CD8-positive, alpha-beta memory T cell (primary cell): ENCODE measurements at regions of chr2 and their contacts with region 1.

Region 1: GRCh38 chr2:96174251-96175144 is 29.3 kb upstream of the DUSP2 start:
- DNase-seq: peak; percentile 73 to 88 (median 75)
- H3K4me3 ChIP-seq: no peak overlapping the region
- H3K4me3 Mint-ChIP-seq: peak overlapping the region in 1 of 7 donors; percentile 22
- H3K27ac ChIP-seq: no peak overlapping the region
- H3K27ac Mint-ChIP-seq: peak overlapping the region in 7 of 8 donors; percentile 0 to 96 (median 83)
- H3K4me1 ChIP-seq: peaks cover 7% of the 10 kb centered on the region
- H3K4me1 Mint-ChIP-seq: peaks cover 6 to 14% (median 7%) of the 10 kb centered on the region in 3 donors
- H3K27me3 ChIP-seq: no peaks in the 10 kb centered on the region
- H3K27me3 Mint-ChIP-seq: peaks cover 0 to 1% of the 10 kb centered on the region in 2 donors

Region 2: GRCh38 chr2:96024336-96025193 is 149.9 kb before region 1 on chr2:
- CTCF ChIA-PET with region 1: interaction called, 19 read pairs
- POLR2A ChIA-PET with region 1: no interaction called
- DNase-seq: no peak
- H3K4me3 ChIP-seq: no peak overlapping the region
- H3K4me3 Mint-ChIP-seq: no peak overlapping the region
- H3K27ac ChIP-seq: no peak overlapping the region
- H3K27ac Mint-ChIP-seq: no peak overlapping the region
- H3K4me1 ChIP-seq: no peaks in the 10 kb centered on the region
- H3K4me1 Mint-ChIP-seq: peaks cover 2 to 3% (median 3%) of the 10 kb centered on the region in 3 donors
- H3K27me3 ChIP-seq: no peaks in the 10 kb centered on the region
- H3K27me3 Mint-ChIP-seq: no peaks in the 10 kb centered on the region

Region 3: GRCh38 chr2:96116879-96117697 is 57.4 kb before region 1 on chr2:
- CTCF ChIA-PET with region 1: interaction called, 29 read pairs
- POLR2A ChIA-PET with region 1: interaction called, 3 read pairs
- DNase-seq: peak; percentile 48 to 72 (median 63)
- H3K4me3 ChIP-seq: peak overlapping the region; percentile 29
- H3K4me3 Mint-ChIP-seq: peak overlapping the region; percentile 47 to 87 (median 75)
- H3K27ac ChIP-seq: no peak overlapping the region
- H3K27ac Mint-ChIP-seq: peak overlapping the region in 4 of 8 donors; percentile 27 to 47 (median 30)
- H3K4me1 ChIP-seq: peaks cover 7% of the 10 kb centered on the region
- H3K4me1 Mint-ChIP-seq: peaks cover 9 to 35% (median 11%) of the 10 kb centered on the region in 3 donors
- H3K27me3 ChIP-seq: no peaks in the 10 kb centered on the region
- H3K27me3 Mint-ChIP-seq: peaks cover 19% of the 10 kb centered on the region in 2 donors

Region 4: DNA sequence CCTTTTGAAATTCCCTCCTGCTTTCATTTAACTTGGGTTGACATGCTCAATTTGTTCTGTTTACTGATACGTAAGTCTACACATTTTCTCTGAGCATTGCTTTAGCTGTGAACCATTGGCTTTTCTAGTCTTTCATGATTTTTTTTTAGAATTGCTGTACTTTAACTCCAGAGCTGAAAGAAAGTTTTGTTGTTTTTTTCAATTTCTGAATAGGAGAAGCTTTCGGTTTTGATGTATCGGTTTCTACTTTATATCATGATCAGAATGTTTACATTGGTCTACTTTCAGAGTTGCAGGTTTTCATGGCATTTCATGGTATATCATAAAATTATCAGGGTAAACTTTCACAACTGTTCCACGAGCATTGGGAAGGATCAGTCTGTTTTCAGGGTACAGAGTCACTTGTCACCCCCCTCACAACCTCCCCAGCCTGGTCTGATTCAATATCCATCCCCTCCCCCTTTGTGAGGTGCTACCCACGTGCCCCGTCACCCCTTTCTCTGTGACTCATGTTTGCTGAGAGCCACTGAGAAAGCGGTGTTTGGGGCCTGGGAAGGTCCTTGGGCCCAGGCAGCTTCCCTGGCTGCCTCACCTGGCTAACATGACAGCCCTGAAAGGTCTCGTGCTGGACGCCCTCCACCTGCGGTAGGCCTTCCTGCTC is 43.2 kb before region 1 on chr2:
- CTCF ChIA-PET with region 1: interaction called, 385 read pairs
- POLR2A ChIA-PET with region 1: interaction called, 37 read pairs
- DNase-seq: peak in 2 of 5 donors; percentile 40 to 66
- H3K4me3 ChIP-seq: no peak overlapping the region
- H3K4me3 Mint-ChIP-seq: peak overlapping the region in 4 of 7 donors; percentile 6 to 64 (median 43)
- H3K27ac ChIP-seq: no peak overlapping the region
- H3K27ac Mint-ChIP-seq: peak overlapping the region; percentile 62 to 93 (median 76)
- H3K4me1 ChIP-seq: no peaks in the 10 kb centered on the region
- H3K4me1 Mint-ChIP-seq: peaks cover 16 to 52% (median 22%) of the 10 kb centered on the region in 3 donors
- H3K27me3 ChIP-seq: no peaks in the 10 kb centered on the region
- H3K27me3 Mint-ChIP-seq: peaks cover 0 to 3% of the 10 kb centered on the region in 2 donors

Region 5: GRCh38 chr2:96138179-96139145 is 36.0 kb before region 1 on chr2 and contains the start of gene ASTL:
- CTCF ChIA-PET with region 1: interaction called, 385 read pairs
- POLR2A ChIA-PET with region 1: interaction called, 37 read pairs
- DNase-seq: peak; percentile 46 to 77 (median 67)
- H3K4me3 ChIP-seq: no peak within 1 kb of the TSS
- H3K4me3 Mint-ChIP-seq: peak within 1 kb of the TSS in 4 of 7 donors; percentile 17 to 61 (median 38)
- H3K27ac ChIP-seq: no peak within 1 kb of the TSS
- H3K27ac Mint-ChIP-seq: peak within 1 kb of the TSS; percentile 23 to 100 (median 88)
- H3K4me1 ChIP-seq: peaks cover 32% of the 10 kb centered on the region
- H3K4me1 Mint-ChIP-seq: peaks cover 30 to 68% (median 41%) of the 10 kb centered on the region in 3 donors
- H3K27me3 ChIP-seq: no peaks in the 10 kb centered on the region
- H3K27me3 Mint-ChIP-seq: peaks cover 0 to 3% of the 10 kb centered on the region in 2 donors
- total RNA-seq, gene ASTL: 16.2 to 18.0 TPM

Region 6: DNA sequence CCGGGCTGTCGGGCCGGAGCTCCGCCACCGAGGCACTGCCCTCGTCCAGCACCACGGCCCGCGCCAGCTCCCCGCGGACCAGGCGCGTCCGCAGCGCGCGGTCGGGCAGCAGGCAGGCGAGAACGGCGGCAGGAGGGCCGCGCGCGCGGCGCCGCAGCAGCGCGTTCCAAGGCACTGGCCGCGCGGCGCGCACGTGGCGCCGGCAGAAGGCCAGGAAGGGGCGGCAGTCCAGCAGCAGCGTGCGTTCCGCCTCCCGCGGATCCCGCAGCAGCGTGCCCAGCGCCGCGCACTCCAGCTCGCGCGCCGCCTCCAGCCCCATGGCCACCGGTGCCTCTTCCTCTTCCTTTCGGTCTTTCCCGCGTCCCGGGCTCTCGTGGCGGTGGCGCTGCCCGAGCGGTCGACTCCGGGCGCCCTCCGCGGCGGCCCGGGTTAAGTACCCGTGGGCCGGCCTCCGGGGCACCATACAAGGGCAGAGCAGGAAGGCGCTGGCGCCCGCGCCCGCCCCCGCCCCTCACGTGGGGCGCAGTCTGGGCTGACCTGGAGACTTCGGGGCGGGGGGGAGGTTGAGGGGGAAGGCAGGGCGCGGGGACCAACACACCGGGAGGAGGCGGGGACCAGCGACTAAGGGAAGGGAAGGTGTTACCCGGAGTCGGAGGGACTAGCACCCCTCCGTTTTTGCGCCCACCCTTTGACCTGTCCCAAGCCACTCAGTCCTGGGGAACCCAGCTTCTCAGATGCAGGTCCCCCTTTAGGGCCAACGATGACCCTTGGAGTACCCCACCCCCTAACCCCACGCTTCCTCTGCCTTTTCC is 29.3 kb before region 1 on chr2 and contains the start of gene DUSP2:
- CTCF ChIA-PET with region 1: interaction called, 385 read pairs
- POLR2A ChIA-PET with region 1: interaction called, 10 read pairs
- DNase-seq: peak; percentile 83 to 93 (median 88)
- H3K4me3 ChIP-seq: peak within 1 kb of the TSS; percentile 89
- H3K4me3 Mint-ChIP-seq: peak within 1 kb of the TSS; percentile 94 to 100 (median 97)
- H3K27ac ChIP-seq: peak within 1 kb of the TSS; percentile 95
- H3K27ac Mint-ChIP-seq: peak within 1 kb of the TSS; percentile 93 to 100 (median 98)
- H3K4me1 ChIP-seq: peaks cover 56% of the 10 kb centered on the region
- H3K4me1 Mint-ChIP-seq: peaks cover 65 to 73% (median 67%) of the 10 kb centered on the region in 3 donors
- H3K27me3 ChIP-seq: no peaks in the 10 kb centered on the region
- H3K27me3 Mint-ChIP-seq: peaks cover 0 to 17% of the 10 kb centered on the region in 2 donors
- total RNA-seq, gene DUSP2: 214 to 237 TPM

Region 7: GRCh38 chr2:96157651-96158553 is 16.6 kb before region 1 on chr2:
- CTCF ChIA-PET with region 1: interaction called, 33 read pairs
- POLR2A ChIA-PET with region 1: interaction called, 4 read pairs
- DNase-seq: peak; percentile 51 to 89 (median 68)
- H3K4me3 ChIP-seq: peak overlapping the region; percentile 51
- H3K4me3 Mint-ChIP-seq: peak overlapping the region; percentile 13 to 88 (median 74)
- H3K27ac ChIP-seq: peak overlapping the region; percentile 58
- H3K27ac Mint-ChIP-seq: peak overlapping the region; percentile 89 to 98 (median 96)
- H3K4me1 ChIP-seq: peaks cover 68% of the 10 kb centered on the region
- H3K4me1 Mint-ChIP-seq: peaks cover 67 to 93% (median 69%) of the 10 kb centered on the region in 3 donors
- H3K27me3 ChIP-seq: no peaks in the 10 kb centered on the region
- H3K27me3 Mint-ChIP-seq: no peaks in the 10 kb centered on the region

Region 8: DNA sequence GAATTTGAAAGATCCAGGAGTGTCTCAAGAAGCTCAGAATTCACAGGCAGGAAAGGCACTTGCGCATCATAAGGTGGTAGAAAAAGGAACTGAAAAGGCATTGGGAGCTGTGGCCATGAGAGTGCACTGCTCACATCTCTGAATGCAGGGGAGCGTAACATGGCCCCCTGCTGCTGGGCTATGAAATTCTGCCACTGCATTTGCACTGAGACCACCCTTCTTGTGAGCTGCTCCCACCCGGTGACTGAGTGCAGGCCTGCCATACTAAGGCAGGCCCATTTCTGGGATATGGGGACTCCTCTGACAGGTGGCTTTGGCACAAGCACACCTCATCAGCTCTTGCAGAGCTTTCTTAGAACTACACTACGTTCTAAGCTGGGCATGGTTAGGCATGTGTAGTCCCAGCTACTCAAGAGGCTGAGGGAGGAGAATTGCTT is 59.4 kb after region 1 on chr2:
- CTCF ChIA-PET with region 1: no interaction called
- POLR2A ChIA-PET with region 1: no interaction called
- DNase-seq: no peak
- H3K4me3 ChIP-seq: no peak overlapping the region
- H3K4me3 Mint-ChIP-seq: no peak overlapping the region
- H3K27ac ChIP-seq: no peak overlapping the region
- H3K27ac Mint-ChIP-seq: no peak overlapping the region
- H3K4me1 ChIP-seq: no peaks in the 10 kb centered on the region
- H3K4me1 Mint-ChIP-seq: no peaks in the 10 kb centered on the region
- H3K27me3 ChIP-seq: no peaks in the 10 kb centered on the region
- H3K27me3 Mint-ChIP-seq: no peaks in the 10 kb centered on the region